WTC11 (cell line): ENCODE measurements at regions of chr4 and their contacts with region 1.

Region 1: GRCh38 chr4:183504064-183504929 is 561 bp upstream of the ING2 start:
- DNase-seq: peak; percentile 98
- ATAC-seq: peak; percentile 86
- H3K4me3 Mint-ChIP-seq: peak overlapping the region; percentile 89
- H3K27ac Mint-ChIP-seq: peak overlapping the region; percentile 98
- H3K4me1 Mint-ChIP-seq: peaks cover 18% of the 10 kb centered on the region
- H3K27me3 Mint-ChIP-seq: no peaks in the 10 kb centered on the region
- CTCF ChIP-seq: no peak

Region 2: DNA sequence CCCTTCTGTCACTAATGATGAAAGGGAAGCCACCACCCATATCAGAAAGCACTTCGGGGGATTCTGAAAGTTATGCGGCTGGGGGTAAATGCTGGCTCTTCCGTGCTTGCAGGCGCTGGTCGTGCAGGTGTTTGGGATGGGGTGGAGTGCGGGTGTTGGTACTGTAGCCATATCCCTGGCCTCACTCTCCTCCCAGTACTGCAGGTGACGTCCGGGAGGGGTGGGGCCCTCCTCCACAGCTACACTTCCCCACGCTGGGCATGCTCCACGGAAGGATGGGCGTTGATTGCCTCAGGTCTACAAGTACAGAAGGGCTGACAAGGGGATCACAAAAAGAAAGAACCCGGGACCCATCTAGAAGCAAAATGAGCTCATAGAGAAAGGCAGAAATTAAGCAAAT is 133.5 kb before region 1 on chr4:
- CTCF ChIA-PET with region 1: no interaction called
- POLR2A ChIA-PET with region 1: no interaction called
- DNase-seq: no peak
- ATAC-seq: peak; percentile 44
- H3K4me3 Mint-ChIP-seq: no peak overlapping the region
- H3K27ac Mint-ChIP-seq: no peak overlapping the region
- H3K4me1 Mint-ChIP-seq: peaks cover 8% of the 10 kb centered on the region
- H3K27me3 Mint-ChIP-seq: no peaks in the 10 kb centered on the region
- CTCF ChIP-seq: no peak

Region 3: GRCh38 chr4:183444214-183445066 is 59.9 kb before region 1 on chr4 and contains the start of gene CDKN2AIP:
- CTCF ChIA-PET with region 1: no interaction called
- POLR2A ChIA-PET with region 1: interaction called, 12 read pairs
- DNase-seq: peak; percentile 91
- ATAC-seq: peak; percentile 82
- H3K4me3 Mint-ChIP-seq: peak within 1 kb of the TSS; percentile 92
- H3K27ac Mint-ChIP-seq: peak within 1 kb of the TSS; percentile 96
- H3K4me1 Mint-ChIP-seq: peaks cover 25% of the 10 kb centered on the region
- H3K27me3 Mint-ChIP-seq: no peaks in the 10 kb centered on the region
- CTCF ChIP-seq: no peak
- total RNA-seq, gene CDKN2AIP: 13.7 to 17.1 TPM (median 16.3 TPM) in 3 replicates

Region 4: GRCh38 chr4:183485401-183486160 is 18.7 kb before region 1 on chr4:
- CTCF ChIA-PET with region 1: no interaction called
- POLR2A ChIA-PET with region 1: no interaction called
- DNase-seq: no peak
- ATAC-seq: no peak
- H3K4me3 Mint-ChIP-seq: no peak overlapping the region
- H3K27ac Mint-ChIP-seq: no peak overlapping the region
- H3K4me1 Mint-ChIP-seq: no peaks in the 10 kb centered on the region
- H3K27me3 Mint-ChIP-seq: no peaks in the 10 kb centered on the region
- CTCF ChIP-seq: no peak

Region 5: GRCh38 chr4:183532821-183533220 is 28.5 kb after region 1 on chr4:
- CTCF ChIA-PET with region 1: no interaction called
- POLR2A ChIA-PET with region 1: no interaction called
- DNase-seq: no peak
- ATAC-seq: no peak
- H3K4me3 Mint-ChIP-seq: no peak overlapping the region
- H3K27ac Mint-ChIP-seq: no peak overlapping the region
- H3K4me1 Mint-ChIP-seq: peaks cover 4% of the 10 kb centered on the region
- H3K27me3 Mint-ChIP-seq: no peaks in the 10 kb centered on the region; the same call in 1 of the 2 replicates
- CTCF ChIP-seq: no peak

Region 6: DNA sequence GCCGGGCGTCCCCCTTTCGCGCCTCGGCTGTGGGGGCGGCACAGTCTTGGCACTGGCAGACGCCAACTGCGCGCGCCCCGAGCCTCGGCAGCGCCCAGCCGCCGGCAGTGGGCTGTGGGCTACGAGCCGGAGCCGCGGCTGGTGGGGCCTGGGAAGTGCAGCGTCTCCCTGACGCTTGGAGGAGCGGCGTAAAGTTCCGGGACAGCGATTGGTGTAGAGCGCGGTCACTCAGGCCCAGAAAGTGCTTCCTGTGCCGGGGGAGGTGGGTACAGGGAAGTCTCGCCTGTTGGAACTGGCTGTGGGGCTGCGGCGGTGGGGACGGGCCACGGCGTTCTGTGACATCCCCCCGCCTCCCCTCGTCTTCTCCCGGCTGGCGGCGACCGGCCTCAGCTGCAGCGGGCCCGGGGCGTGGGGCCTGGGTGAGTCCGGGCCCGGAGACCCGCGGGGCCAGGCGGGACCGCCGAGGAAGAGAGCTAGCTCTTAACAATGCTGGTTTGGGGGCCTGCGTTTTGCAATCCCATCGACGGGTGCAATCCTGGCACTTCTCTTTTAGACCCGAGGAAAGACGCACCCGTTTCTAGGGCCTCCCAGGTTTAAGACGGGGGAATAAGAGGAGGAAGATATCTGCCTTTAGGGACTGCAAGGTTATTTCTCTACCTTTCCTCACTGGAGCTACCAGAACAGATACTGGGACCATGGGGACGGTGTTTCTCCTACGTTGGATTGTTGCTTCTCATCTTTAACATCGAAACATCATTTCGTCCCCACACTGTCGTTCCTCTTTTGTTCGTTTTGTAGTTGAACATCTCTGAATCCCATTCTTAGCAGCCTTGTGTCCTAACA is 155.0 kb after region 1 on chr4 and contains the starts of genes RWDD4 and TRAPPC11:
- CTCF ChIA-PET with region 1: no interaction called
- POLR2A ChIA-PET with region 1: no interaction called
- DNase-seq: peak; percentile 97
- ATAC-seq: peak; percentile 99
- H3K4me3 Mint-ChIP-seq: peak within 1 kb of the TSS; percentile 86
- H3K27ac Mint-ChIP-seq: peak within 1 kb of the TSS; percentile 91
- H3K4me1 Mint-ChIP-seq: peaks cover 19% of the 10 kb centered on the region
- H3K27me3 Mint-ChIP-seq: no peaks in the 10 kb centered on the region
- CTCF ChIP-seq: no peak
- total RNA-seq, gene RWDD4: 15.6 to 17.8 TPM (median 16.4 TPM) in 3 replicates
- total RNA-seq, gene TRAPPC11: 30.0 to 35.9 TPM (median 33.6 TPM) in 3 replicates